ENCODE measurements at regions of chr3 and their contacts with region 1.

Region 1: GRCh38 chr3:43855674-43856299 is 165.0 kb downstream of the ABHD5 start:
- DNase-seq: no peak
- H3K4me3 ChIP-seq: no peak overlapping the region
- H3K27me3 ChIP-seq: no peaks in the 10 kb centered on the region
- CTCF ChIP-seq: peak; percentile 86

Region 2: GRCh38 chr3:43843386-43843785 is 12.4 kb before region 1 on chr3:
- CTCF ChIA-PET with region 1: interaction called, 11 read pairs
- POLR2A ChIA-PET with region 1: no interaction called
- DNase-seq: no peak
- H3K4me3 ChIP-seq: no peak overlapping the region
- H3K27me3 ChIP-seq: no peaks in the 10 kb centered on the region
- CTCF ChIP-seq: no peak

Region 3: DNA sequence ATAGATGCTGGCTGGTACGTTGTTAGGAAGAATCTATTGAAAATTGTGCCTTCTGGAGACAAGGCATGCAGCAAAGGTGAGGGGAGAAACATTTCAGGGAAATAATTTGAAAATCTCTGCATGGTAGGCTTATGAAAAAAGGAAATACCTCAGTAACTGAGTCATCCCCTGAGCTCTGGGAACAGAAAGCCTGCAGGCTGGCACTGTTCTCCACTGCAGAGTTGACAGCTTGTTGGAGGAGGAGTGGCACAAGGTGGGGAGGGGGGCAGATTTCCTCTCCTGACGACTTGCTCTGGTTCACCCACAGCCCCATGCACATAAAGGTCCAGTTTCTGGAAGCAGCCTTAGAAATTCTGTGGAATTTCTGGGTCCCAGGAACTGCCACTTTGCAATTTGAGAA is 14.3 kb after region 1 on chr3:
- CTCF ChIA-PET with region 1: interaction called, 57 read pairs
- POLR2A ChIA-PET with region 1: no interaction called
- DNase-seq: no peak
- H3K4me3 ChIP-seq: no peak overlapping the region
- H3K27me3 ChIP-seq: no peaks in the 10 kb centered on the region
- CTCF ChIP-seq: no peak

Measured in BJ (cell line).